ENCODE measurements at regions of chr6 and their contacts with region 1.

Region 1: GRCh38 chr6:119078376-119079282 is at the start of gene FAM184A:
- DNase-seq: peak; percentile 74 to 86 (median 82)
- ATAC-seq: peak; percentile 79
- H3K4me3 ChIP-seq: peak within 1 kb of the TSS; percentile 77
- H3K4me3 Mint-ChIP-seq: peak within 1 kb of the TSS; percentile 75 to 97 (median 94)
- H3K27ac ChIP-seq: peak within 1 kb of the TSS; percentile 74
- H3K27ac Mint-ChIP-seq: peak within 1 kb of the TSS; percentile 66 to 97 (median 95)
- H3K4me1 ChIP-seq: peaks cover 5 to 25% of the 10 kb centered on the region in 2 donors
- H3K4me1 Mint-ChIP-seq: peaks cover 14 to 50% (median 39%) of the 10 kb centered on the region in 7 donors
- H3K27me3 ChIP-seq: no peaks in the 10 kb centered on the region
- H3K27me3 Mint-ChIP-seq: peaks cover 0 to 9% (median 0%) of the 10 kb centered on the region in 5 donors
- total RNA-seq, gene FAM184A: 5.3 to 9.8 (median 7.9) TPM

Region 2: GRCh38 chr6:118709859-118710350 is 368.7 kb before region 1 on chr6:
- CTCF ChIA-PET with region 1: no interaction called
- POLR2A ChIA-PET with region 1: interaction called, 3 read pairs
- intact Hi-C with region 1: loop called (anchors 1 to 2 kb)
- DNase-seq: peak; percentile 25 to 87 (median 83)
- ATAC-seq: peak; percentile 93
- H3K4me3 ChIP-seq: peak overlapping the region; percentile 91
- H3K4me3 Mint-ChIP-seq: peak overlapping the region; percentile 95 to 100 (median 97)
- H3K27ac ChIP-seq: peak overlapping the region; percentile 76
- H3K27ac Mint-ChIP-seq: peak overlapping the region; percentile 94 to 99 (median 97)
- H3K4me1 ChIP-seq: peaks cover 48 to 49% of the 10 kb centered on the region in 2 donors
- H3K4me1 Mint-ChIP-seq: peaks cover 47 to 81% (median 74%) of the 10 kb centered on the region in 7 donors
- H3K27me3 ChIP-seq: no peaks in the 10 kb centered on the region
- H3K27me3 Mint-ChIP-seq: no peaks in the 10 kb centered on the region

Region 3: DNA sequence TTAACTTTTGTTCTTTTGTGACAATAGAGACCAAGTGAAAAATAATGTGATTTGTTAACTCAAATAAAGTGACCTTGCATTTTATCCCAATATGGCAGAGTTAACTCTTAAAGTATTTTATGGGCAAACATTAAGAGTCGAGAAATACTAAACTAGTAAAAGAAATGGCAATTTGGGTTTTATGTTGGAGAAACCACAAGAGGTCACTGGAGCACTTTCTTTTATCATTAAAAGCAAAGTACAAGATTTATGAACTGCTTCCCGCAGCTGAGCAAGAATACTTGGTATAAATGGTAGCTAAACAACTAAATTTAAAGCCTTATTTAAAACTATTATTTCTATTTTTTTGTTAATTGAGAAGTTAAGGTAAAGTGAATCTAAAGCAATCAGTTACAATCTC is 110.2 kb before region 1 on chr6:
- CTCF ChIA-PET with region 1: interaction called, 4 read pairs
- POLR2A ChIA-PET with region 1: no interaction called
- intact Hi-C with region 1: loop called in 1 of 2 experiments (anchors 1 kb)
- DNase-seq: peak in 6 of 9 donors; percentile 8 to 35 (median 24)
- ATAC-seq: no peak
- H3K4me3 ChIP-seq: no peak overlapping the region
- H3K4me3 Mint-ChIP-seq: no peak overlapping the region
- H3K27ac ChIP-seq: no peak overlapping the region
- H3K27ac Mint-ChIP-seq: no peak overlapping the region
- H3K4me1 ChIP-seq: no peaks in the 10 kb centered on the region
- H3K4me1 Mint-ChIP-seq: peaks cover 0 to 4% (median 0%) of the 10 kb centered on the region in 7 donors
- H3K27me3 ChIP-seq: no peaks in the 10 kb centered on the region
- H3K27me3 Mint-ChIP-seq: no peaks in the 10 kb centered on the region

Region 4: GRCh38 chr6:119020597-119021561 is 57.8 kb before region 1 on chr6:
- CTCF ChIA-PET with region 1: no interaction called
- POLR2A ChIA-PET with region 1: no interaction called
- intact Hi-C with region 1: no loop called
- DNase-seq: no peak
- ATAC-seq: no peak
- H3K4me3 ChIP-seq: no peak overlapping the region
- H3K4me3 Mint-ChIP-seq: no peak overlapping the region
- H3K27ac ChIP-seq: no peak overlapping the region
- H3K27ac Mint-ChIP-seq: peak overlapping the region in 1 of 9 donors; percentile 37
- H3K4me1 ChIP-seq: no peaks in the 10 kb centered on the region
- H3K4me1 Mint-ChIP-seq: peaks cover 0 to 5% (median 0%) of the 10 kb centered on the region in 7 donors
- H3K27me3 ChIP-seq: no peaks in the 10 kb centered on the region
- H3K27me3 Mint-ChIP-seq: no peaks in the 10 kb centered on the region

Region 5: DNA sequence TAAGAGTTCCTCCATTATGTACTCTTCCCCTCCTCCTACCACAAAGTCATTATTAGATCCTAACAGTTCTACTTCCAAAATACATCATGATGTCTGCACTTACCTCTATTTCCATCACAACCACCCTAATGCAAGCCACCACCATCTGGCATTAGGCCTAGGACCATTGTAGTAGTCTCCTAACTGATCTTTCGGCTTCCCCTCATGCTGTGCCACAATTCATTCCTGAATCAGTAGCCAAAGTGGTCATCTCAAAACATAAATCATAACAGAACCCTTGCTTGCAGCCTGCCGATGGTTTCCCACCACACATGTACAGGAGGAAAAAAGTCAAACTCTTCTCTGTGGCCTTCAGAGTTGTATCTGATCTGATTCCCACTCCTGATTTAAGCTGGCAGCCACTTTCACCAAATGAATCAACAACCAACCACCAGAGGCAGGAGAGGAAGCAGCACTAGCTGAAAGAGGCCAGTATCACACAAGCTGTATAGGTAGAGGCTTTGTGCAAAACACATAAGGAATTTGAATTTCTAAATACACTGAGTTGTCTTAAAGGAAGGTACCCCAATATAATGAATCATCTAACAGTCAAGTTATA is 26.2 kb before region 1 on chr6:
- CTCF ChIA-PET with region 1: no interaction called
- POLR2A ChIA-PET with region 1: interaction called, 3 read pairs
- intact Hi-C with region 1: loop called in 1 of 2 experiments (anchors 1 kb)
- DNase-seq: peak in 3 of 9 donors; percentile 13 to 26 (median 24)
- ATAC-seq: peak; percentile 61
- H3K4me3 ChIP-seq: no peak overlapping the region
- H3K4me3 Mint-ChIP-seq: peak overlapping the region in 2 of 10 donors; percentile 9 to 14
- H3K27ac ChIP-seq: no peak overlapping the region
- H3K27ac Mint-ChIP-seq: peak overlapping the region in 6 of 9 donors; percentile 1 to 74 (median 46)
- H3K4me1 ChIP-seq: no peaks in the 10 kb centered on the region
- H3K4me1 Mint-ChIP-seq: peaks cover 9 to 43% (median 24%) of the 10 kb centered on the region in 7 donors
- H3K27me3 ChIP-seq: no peaks in the 10 kb centered on the region
- H3K27me3 Mint-ChIP-seq: no peaks in the 10 kb centered on the region

Region 6: DNA sequence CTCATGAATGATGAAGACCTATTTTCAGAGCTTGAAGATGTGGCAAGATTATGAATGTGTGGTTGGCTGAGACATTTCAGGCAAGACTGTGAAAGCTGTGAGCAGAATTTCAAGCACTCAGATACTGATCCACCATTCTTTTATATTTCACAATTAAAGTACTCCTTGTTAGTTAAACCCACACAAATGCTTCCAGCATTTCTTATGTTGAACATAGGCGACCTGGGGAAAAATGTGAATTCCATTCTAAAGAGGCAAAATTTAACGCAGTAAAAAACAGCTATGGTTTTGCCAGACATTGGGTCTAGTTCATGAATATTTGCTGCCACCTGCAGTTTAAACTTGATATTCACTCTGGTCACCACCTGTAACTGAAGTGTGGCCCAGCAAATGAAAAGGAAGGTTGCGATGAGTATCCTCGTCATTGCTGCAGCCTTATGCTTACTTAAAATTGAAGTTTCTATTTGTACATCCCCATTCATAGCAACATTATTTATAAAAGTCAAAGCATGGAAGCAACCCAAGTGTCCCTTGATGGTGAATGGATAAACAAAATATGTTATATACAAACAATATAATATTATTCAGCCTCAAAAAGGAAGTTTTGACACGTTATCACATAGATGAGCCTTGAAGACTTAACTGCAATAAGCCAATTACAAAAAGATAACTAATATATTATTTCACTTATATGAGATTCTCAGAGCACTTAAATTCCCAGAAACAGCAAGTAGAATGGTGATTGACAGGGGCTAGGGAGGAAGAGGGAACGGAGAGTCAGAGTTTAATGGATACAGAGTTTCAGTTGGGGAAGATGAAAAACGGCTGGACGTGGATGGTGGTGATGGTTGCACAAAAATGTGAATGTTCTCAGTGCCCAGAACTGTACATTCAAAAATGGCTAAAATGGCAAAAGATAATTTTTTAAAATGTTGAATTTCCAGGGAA is 32.2 kb after region 1 on chr6:
- CTCF ChIA-PET with region 1: interaction called, 9 read pairs
- POLR2A ChIA-PET with region 1: no interaction called
- intact Hi-C with region 1: loop called in 1 of 2 experiments (anchors 1 kb)
- DNase-seq: peak in 7 of 9 donors; percentile 47 to 76 (median 73)
- ATAC-seq: peak; percentile 85
- H3K4me3 ChIP-seq: no peak overlapping the region
- H3K4me3 Mint-ChIP-seq: peak overlapping the region in 4 of 10 donors; percentile 34 to 61 (median 52)
- H3K27ac ChIP-seq: no peak overlapping the region
- H3K27ac Mint-ChIP-seq: peak overlapping the region in 1 of 9 donors; percentile 21
- H3K4me1 ChIP-seq: peaks cover 0 to 8% of the 10 kb centered on the region in 2 donors
- H3K4me1 Mint-ChIP-seq: peaks cover 2 to 22% (median 13%) of the 10 kb centered on the region in 7 donors
- H3K27me3 ChIP-seq: no peaks in the 10 kb centered on the region
- H3K27me3 Mint-ChIP-seq: peaks cover 0 to 4% (median 0%) of the 10 kb centered on the region in 5 donors

Measured in naive thymus-derived CD4-positive, alpha-beta T cell (primary cell).